Activated CD4-positive, alpha-beta T cell treated with anti-CD3 and anti-CD28 coated beads, Interleukin-2, amount 10 ng/mL, durations not matched to agents 24 days and 14 days (primary cell): ENCODE measurements at regions of chr1 and their contacts with region 1.

Region 1: GRCh38 chr1:66764994-66765578 is 12.8 kb downstream of the DYNLT5 start:
- DNase-seq: peak; percentile 86
- H3K4me3 Mint-ChIP-seq: no peak overlapping the region
- H3K27ac Mint-ChIP-seq: no peak overlapping the region
- H3K4me1 Mint-ChIP-seq: peaks cover 16% of the 10 kb centered on the region
- H3K27me3 Mint-ChIP-seq: no peaks in the 10 kb centered on the region

Region 2: GRCh38 chr1:66732407-66733166 is 32.5 kb before region 1 on chr1:
- intact Hi-C with region 1: no loop called
- DNase-seq: no peak
- H3K4me3 Mint-ChIP-seq: no peak overlapping the region
- H3K27ac Mint-ChIP-seq: peak overlapping the region; percentile 73
- H3K4me1 Mint-ChIP-seq: peaks cover 12% of the 10 kb centered on the region
- H3K27me3 Mint-ChIP-seq: no peaks in the 10 kb centered on the region

Region 3: GRCh38 chr1:66924756-66925557 is 159.9 kb after region 1 on chr1 and contains the starts of genes DNAI4 and MIER1:
- intact Hi-C with region 1: loop called (anchors 1 kb)
- DNase-seq: peak; percentile 99
- H3K4me3 Mint-ChIP-seq: peak within 1 kb of the TSS; percentile 99
- H3K27ac Mint-ChIP-seq: peak within 1 kb of the TSS; percentile 97
- H3K4me1 Mint-ChIP-seq: peaks cover 41% of the 10 kb centered on the region
- H3K27me3 Mint-ChIP-seq: no peaks in the 10 kb centered on the region
- total RNA-seq, gene DNAI4: 0.26 and 2.7 TPM in 2 replicates
- total RNA-seq, gene MIER1: 51.8 and 54.9 TPM in 2 replicates

Region 4: GRCh38 chr1:66996018-66996682 is 231.1 kb after region 1 on chr1:
- intact Hi-C with region 1: loop called (anchors 5 kb)
- DNase-seq: peak; percentile 90
- H3K4me3 Mint-ChIP-seq: no peak overlapping the region
- H3K27ac Mint-ChIP-seq: no peak overlapping the region
- H3K4me1 Mint-ChIP-seq: peaks cover 11% of the 10 kb centered on the region
- H3K27me3 Mint-ChIP-seq: no peaks in the 10 kb centered on the region

Region 5: GRCh38 chr1:67149179-67149770 is 384.2 kb after region 1 on chr1:
- intact Hi-C with region 1: loop called (anchors 1 kb)
- DNase-seq: peak; percentile 86
- H3K4me3 Mint-ChIP-seq: no peak overlapping the region
- H3K27ac Mint-ChIP-seq: peak overlapping the region; percentile 55
- H3K4me1 Mint-ChIP-seq: peaks cover 32% of the 10 kb centered on the region
- H3K27me3 Mint-ChIP-seq: peaks cover 4% of the 10 kb centered on the region